Heart left ventricle (tissue), 16 donors: ENCODE measurements at regions of chr20 and their contacts with region 1.

Region 1: DNA sequence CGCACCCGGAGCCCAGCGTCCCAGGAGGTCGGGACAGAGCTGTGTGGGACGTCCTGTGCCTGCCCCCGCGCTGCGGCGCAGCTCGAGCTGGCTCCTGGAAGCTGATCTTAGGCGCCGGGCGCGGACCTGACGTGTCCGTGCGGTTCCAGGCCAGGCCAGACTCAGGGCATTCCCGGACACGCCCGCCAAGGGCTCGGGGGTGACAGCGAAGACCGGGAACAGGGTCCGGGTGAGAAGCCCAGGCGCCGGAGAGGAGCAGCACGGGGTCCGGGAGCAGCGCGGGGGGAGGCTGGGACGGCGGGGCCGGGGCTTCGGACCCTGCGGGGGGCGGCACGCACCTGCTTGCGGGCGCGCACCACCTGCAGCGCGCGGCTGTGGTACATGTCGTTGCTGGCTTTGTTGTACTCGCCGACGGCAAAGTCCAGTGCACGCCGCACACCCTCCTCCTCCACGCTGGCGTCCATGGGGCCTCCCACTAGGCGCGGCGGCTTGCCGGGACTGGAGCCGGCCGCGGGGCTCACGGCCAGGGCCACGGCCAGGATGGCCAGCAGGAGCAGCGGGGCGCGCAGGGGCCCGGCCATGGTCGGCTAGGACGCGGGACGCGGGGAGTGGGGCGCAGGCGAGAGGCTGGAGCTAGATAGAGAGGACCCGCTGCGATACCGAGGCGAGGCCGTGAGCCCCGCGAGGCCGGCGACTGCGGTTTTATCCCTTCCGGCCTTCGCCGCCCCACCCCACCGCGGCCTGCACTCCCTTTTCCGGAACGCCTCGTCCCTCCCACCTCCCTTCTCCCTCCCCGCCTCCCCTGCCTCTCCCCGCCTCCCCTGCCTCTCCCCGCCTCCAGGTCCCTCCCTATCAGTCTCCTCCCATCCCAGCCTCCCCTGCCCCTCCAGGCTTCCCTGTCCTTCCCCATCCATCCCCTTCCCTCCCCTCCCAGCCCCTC is at the start of gene CST3:
- DNase-seq: peak; percentile 93 to 95 (median 95)
- ATAC-seq: peak; percentile 64 to 89 (median 87)
- H3K4me3 ChIP-seq: peak within 1 kb of the TSS; percentile 59 to 100 (median 90)
- H3K27ac ChIP-seq: peak within 1 kb of the TSS; percentile 87 to 100 (median 96)
- H3K4me1 ChIP-seq: peaks cover 0 to 80% (median 36%) of the 10 kb centered on the region in 12 donors
- H3K27me3 ChIP-seq: no peaks in the 10 kb centered on the region
- CTCF ChIP-seq: peak in 3 of 12 donors; percentile 6 to 23 (median 22)
- POLR2A ChIP-seq: peak; percentile 47 to 94
- total RNA-seq, gene CST3: 482 to 1,194 (median 708) TPM

Region 2: DNA sequence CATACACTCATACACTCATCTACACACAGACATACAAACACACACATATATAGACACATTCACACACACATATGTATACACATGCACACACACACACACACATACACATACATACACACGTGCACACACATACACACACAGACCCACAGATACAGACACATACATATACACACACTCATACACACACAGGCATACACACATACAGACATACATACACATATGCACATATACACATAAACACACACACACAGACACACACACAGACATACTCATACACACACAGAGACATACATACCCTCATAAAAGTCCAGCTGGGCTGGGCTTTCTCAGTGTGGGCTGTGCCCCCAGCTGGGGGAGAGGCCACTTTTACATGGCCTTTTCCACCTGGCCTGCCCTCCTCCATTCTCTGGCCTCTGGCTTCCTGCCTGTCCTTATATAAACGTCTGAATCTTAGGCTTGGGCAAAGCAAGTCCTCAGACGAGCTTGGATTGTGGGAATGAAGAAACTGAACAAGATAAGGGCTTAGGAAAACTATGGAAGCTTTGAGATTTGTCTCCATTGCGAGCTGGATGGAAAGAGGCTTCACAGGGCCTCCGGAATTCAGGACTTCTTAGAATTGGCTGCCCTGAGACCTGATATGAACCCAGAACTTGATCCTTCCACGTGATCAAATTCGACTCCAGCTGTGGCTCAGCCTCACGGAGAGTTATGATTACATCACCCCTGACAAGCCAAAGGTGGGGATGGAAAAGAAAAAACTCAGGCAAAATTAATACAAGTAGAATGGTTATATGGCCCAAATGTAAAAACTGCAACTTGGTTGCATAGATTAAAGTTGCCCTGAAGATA is 22.7 kb after region 1 on chr20:
- intact Hi-C with region 1: loop called in 1 of 10 experiments (anchors 2 kb)
- DNase-seq: peak in 2 of 5 donors; percentile 47 to 62
- ATAC-seq: peak in 3 of 4 donors; percentile 21 to 73 (median 63)
- H3K4me3 ChIP-seq: no peak overlapping the region
- H3K27ac ChIP-seq: peak overlapping the region in 10 of 12 donors; percentile 3 to 77 (median 50)
- H3K4me1 ChIP-seq: peaks cover 0 to 21% (median 10%) of the 10 kb centered on the region in 12 donors
- H3K27me3 ChIP-seq: no peaks in the 10 kb centered on the region
- CTCF ChIP-seq: no peak
- POLR2A ChIP-seq: no peak